Activated B cell treated with CpG ODN at 0.5 μM for 24 hours (primary cell): ENCODE measurements at regions of chrX and their contacts with region 1.

Region 1: GRCh38 chrX:85977218-85977617 is 70.1 kb downstream of the CHM start:
- DNase-seq: no peak
- ATAC-seq: peak; percentile 14
- H3K4me3 Mint-ChIP-seq: peak overlapping the region; percentile 21
- H3K27ac Mint-ChIP-seq: peak overlapping the region; percentile 78
- H3K4me1 Mint-ChIP-seq: peaks cover 14% of the 10 kb centered on the region
- H3K27me3 Mint-ChIP-seq: no peaks in the 10 kb centered on the region
- CTCF ChIP-seq: no peak

Region 2: GRCh38 chrX:85454295-85454694 is 522.9 kb before region 1 on chrX:
- CTCF ChIA-PET with region 1: no interaction called
- POLR2A ChIA-PET with region 1: no interaction called
- intact Hi-C with region 1: no loop called
- DNase-seq: no peak
- ATAC-seq: no peak
- H3K4me3 Mint-ChIP-seq: no peak overlapping the region
- H3K27ac Mint-ChIP-seq: no peak overlapping the region
- H3K4me1 Mint-ChIP-seq: no peaks in the 10 kb centered on the region
- H3K27me3 Mint-ChIP-seq: no peaks in the 10 kb centered on the region
- CTCF ChIP-seq: no peak

Region 3: DNA sequence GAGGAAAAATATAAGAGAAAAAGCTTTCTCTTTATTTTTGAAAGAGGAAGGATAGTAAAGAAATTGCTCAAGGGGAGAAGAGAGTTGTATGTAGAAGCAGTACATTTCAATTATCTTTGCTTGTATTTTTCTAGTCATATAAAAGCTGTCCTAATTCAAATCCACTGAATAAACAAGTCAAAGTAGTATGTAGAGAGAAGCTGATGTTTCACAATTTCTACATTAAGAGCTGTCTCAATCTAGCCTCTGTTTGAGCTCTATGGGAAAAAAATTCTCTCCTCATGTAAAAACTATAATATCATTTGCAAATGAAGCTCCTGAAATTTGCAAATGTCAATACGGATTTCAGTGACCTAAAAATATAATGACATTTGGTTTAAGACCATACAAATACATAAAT is 17.6 kb after region 1 on chrX:
- CTCF ChIA-PET with region 1: no interaction called
- POLR2A ChIA-PET with region 1: interaction called, 14 read pairs
- intact Hi-C with region 1: no loop called
- DNase-seq: no peak
- ATAC-seq: no peak
- H3K4me3 Mint-ChIP-seq: no peak overlapping the region
- H3K27ac Mint-ChIP-seq: no peak overlapping the region
- H3K4me1 Mint-ChIP-seq: peaks cover 32% of the 10 kb centered on the region
- H3K27me3 Mint-ChIP-seq: no peaks in the 10 kb centered on the region
- CTCF ChIP-seq: no peak